Mammary epithelial cell (primary cell): ENCODE measurements at regions of chr3 and their contacts with region 1.

Region 1: DNA sequence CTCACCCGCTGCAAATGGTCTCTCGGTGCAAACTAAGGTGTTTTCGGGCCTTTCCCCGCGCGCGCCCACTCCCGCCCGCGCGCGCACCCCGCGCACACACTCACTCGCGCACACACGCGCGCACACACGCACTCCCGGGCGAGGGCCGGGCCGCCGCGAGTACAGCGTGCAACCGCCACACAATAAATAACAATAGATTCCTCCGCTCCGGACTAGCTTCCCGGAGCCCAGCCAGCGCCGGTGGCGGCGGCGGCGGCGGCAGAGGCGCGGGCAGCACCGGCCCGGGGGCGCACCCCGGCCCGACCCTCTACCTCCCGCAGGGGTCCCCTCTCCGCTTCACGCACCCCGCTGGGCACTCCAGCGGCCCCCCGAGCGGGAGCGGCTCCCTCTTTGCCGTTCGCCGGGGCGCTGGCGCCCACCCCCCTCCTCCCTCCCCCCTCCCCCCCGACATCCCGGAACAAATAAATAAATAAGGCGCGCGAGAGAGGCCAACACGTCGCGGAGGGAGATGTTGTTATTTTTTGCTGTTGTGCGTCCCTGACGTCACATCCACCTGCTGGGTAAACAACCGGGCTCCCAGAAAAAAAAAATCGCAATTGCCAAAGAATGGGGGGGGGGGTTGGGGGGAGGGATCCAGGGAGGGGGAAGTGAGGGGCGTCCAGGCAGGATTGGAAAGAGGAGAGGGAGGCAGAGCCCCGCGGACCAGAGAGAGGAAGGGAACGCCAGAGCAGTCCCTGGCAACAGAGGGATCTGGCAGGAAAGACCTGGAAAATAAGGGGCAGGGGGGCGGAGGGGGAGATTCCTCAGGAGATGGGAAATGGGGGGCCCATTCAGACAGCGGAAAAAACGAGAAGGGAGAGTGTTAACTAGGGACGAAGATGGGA is at the start of gene FOXP1:
- DNase-seq: peak; percentile 67
- H3K4me3 ChIP-seq: peak within 1 kb of the TSS; percentile 88 to 98 (median 89)
- H3K27ac ChIP-seq: peak within 1 kb of the TSS; percentile 80
- H3K4me1 ChIP-seq: peaks cover 15% of the 10 kb centered on the region
- H3K27me3 ChIP-seq: no peaks in the 10 kb centered on the region
- CTCF ChIP-seq: no peak
- total RNA-seq, gene FOXP1: 49.5 to 62.5 TPM

Region 2: DNA sequence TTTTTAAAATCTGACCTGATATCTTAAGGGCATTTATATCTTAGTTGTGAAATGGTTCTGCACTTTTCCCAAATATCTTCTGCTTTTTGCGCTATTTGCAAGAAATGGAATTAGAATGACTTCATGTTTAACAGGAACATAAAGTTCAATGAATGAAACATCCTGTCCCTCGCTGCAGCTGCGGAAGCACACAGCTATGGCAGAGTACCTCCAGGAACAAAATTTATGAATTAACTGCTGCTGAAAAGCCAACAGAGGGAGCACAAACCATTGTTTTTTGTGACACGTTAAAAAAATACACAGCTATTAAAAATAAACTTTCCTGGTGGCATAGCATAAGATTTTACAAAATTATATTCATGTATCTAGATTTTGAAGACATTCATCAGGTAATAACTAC is 867.0 kb before region 1 on chr3:
- CTCF ChIA-PET with region 1: no interaction called
- dilution Hi-C with region 1: no loop called
- in situ Hi-C with region 1: no loop called
- intact Hi-C with region 1: loop called (anchors 5 kb)
- DNase-seq: peak; percentile 3
- H3K4me3 ChIP-seq: no peak overlapping the region
- H3K27ac ChIP-seq: no peak overlapping the region
- H3K4me1 ChIP-seq: no peaks in the 10 kb centered on the region
- H3K27me3 ChIP-seq: no peaks in the 10 kb centered on the region
- CTCF ChIP-seq: peak; percentile 21 to 47

Region 3: GRCh38 chr3:71069797-71070196 is 514.0 kb before region 1 on chr3:
- CTCF ChIA-PET with region 1: interaction called, 4 read pairs
- dilution Hi-C with region 1: loop called (anchors 5 kb)
- in situ Hi-C with region 1: loop called (anchors 10 to 25 kb)
- intact Hi-C with region 1: loop called (anchors 1 kb)
- DNase-seq: peak; percentile 96
- H3K4me3 ChIP-seq: no peak overlapping the region
- H3K27ac ChIP-seq: peak overlapping the region; percentile 70
- H3K4me1 ChIP-seq: peaks cover 58% of the 10 kb centered on the region
- H3K27me3 ChIP-seq: no peaks in the 10 kb centered on the region
- CTCF ChIP-seq: peak; percentile 73 to 81

Region 4: DNA sequence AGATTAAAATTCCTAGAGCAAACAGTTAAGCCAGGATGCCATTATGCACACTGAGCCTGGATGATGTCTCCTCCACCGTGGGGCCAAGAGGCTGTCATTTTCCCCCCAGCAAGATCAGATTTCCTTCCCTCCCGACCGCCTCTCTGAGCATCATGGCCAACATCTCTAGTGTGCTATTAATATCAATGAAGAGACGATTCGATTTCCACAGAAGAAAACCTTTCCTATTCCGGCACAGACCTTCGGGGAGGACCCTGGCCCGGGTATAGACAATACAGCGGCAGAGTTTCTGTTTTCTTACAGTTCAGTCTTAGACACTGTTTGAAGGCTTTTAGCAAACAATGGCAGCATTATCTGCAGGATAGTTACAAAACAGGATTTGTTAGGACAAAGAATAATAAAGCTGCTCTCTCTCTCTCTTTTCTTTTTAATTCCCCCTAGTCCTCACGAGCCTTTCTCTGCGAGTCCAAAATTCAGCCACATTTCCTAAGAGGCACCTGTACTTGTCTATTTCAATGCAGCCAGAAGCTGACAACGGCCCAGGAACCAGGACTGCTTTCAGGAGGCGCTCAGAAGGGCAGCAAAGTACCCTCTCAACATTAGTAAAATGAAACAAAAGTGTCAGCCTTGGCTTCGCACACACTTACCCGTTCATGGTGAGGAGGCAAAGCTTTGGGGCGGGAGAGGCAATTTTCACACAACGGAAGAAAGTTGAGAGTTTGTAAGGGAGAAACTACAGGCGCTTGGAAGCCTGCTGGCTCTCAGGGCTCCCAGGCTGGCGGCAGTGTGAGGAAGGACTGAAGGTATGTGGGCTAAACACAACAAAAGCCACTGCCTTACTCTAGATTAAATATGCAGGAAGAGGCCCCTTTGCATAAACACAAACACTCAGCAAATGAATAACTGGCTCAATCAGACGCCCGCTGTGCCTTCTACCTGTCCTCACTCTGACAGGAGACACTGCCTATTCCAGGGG is 278.3 kb before region 1 on chr3:
- CTCF ChIA-PET with region 1: no interaction called
- dilution Hi-C with region 1: no loop called
- in situ Hi-C with region 1: no loop called
- intact Hi-C with region 1: loop called (anchors 1 kb)
- DNase-seq: peak; percentile 39
- H3K4me3 ChIP-seq: peak overlapping the region; percentile 31 to 51 (median 40)
- H3K27ac ChIP-seq: peak overlapping the region; percentile 25
- H3K4me1 ChIP-seq: peaks cover 10% of the 10 kb centered on the region
- H3K27me3 ChIP-seq: no peaks in the 10 kb centered on the region
- CTCF ChIP-seq: no peak

Region 5: DNA sequence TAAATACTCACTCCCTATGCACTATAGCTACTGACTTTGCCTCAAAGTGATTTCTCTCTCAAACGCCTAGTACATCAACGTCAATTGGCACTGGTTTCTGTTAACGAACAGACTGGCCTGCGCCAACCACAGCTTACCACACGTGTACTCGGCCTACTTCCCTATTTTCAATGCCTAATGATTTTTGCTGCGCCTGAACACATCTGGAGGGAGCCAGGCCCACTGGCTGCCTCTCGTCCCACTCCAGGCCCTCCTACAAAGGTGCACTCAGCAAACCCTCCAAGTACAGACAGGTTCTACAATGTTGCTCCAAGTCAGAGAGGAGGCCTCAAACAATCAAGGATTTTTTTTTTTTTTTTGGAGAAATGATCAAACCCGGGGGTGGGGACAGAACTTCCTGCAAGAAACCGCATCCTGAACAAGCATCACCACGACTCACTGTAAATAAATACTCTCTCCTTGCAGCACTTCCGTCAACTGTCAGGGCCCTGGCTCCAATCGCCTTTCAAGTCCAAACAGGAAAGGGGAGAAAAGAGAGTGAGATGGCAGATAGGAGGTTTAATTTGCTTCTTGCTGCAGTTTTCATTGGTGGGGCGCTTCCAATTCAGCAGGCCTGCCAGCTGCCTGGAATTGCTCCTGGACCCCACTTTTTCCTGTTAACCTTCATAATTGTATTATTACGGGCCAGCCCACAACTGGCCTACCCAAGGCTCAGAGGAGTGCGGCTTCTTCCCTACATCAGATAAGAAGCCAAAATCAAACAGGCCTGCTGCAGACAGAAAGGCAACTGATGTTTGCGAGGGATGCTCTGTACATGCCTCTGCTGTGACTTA is 139.6 kb before region 1 on chr3:
- CTCF ChIA-PET with region 1: no interaction called
- dilution Hi-C with region 1: no loop called
- in situ Hi-C with region 1: loop called in 1 of 2 experiments (anchors 10 kb)
- intact Hi-C with region 1: loop called (anchors 2 kb)
- DNase-seq: peak; percentile 97
- H3K4me3 ChIP-seq: peak overlapping the region in 1 of 3 experiments; percentile 4
- H3K27ac ChIP-seq: peak overlapping the region; percentile 93
- H3K4me1 ChIP-seq: peaks cover 54% of the 10 kb centered on the region
- H3K27me3 ChIP-seq: no peaks in the 10 kb centered on the region
- CTCF ChIP-seq: no peak

Region 6: GRCh38 chr3:71537211-71537611 is 46.6 kb before region 1 on chr3:
- CTCF ChIA-PET with region 1: no interaction called
- dilution Hi-C with region 1: loop called (anchors 5 kb)
- in situ Hi-C with region 1: no loop called
- intact Hi-C with region 1: loop called (anchors 2 kb)
- DNase-seq: peak; percentile 88
- H3K4me3 ChIP-seq: no peak overlapping the region
- H3K27ac ChIP-seq: peak overlapping the region; percentile 35
- H3K4me1 ChIP-seq: peaks cover 53% of the 10 kb centered on the region
- H3K27me3 ChIP-seq: no peaks in the 10 kb centered on the region
- CTCF ChIP-seq: no peak